ENCODE measurements at regions of chr15 and their contacts with region 1.

Region 1: DNA sequence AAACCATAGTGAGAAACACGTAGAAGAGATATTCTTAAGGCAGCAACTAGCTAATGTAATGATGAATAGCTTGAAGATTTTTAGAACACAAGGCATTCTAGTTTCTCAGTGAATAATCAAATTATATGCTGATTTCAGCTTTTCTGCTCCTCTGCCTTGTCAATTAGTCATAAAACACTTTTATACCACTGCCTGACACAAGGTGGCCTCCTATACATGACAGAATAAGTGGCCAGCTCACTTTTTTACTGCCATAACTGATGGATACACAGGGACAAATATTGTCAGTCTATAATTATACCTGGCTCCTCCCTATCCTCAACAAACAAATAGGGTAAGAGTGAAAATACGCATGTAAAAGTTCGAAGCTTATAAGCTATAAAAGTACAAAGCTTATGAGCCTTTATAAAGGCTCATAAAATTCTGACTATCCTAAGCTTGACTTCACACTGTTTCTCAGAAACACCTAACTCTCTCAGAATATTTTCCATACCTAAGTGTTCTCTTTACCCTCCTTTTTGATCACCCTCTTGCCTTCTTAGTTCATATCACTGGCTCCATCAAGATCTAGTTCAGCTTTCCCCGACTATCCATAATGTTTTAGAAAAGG is 81.6 kb downstream of the HERC1 start:
- DNase-seq: peak; percentile 62
- H3K4me3 ChIP-seq: no peak overlapping the region
- H3K27ac ChIP-seq: peak overlapping the region; percentile 6
- H3K4me1 ChIP-seq: no peaks in the 10 kb centered on the region
- H3K27me3 ChIP-seq: no peaks in the 10 kb centered on the region
- CTCF ChIP-seq: peak; percentile 78

Region 2: GRCh38 chr15:63891079-63891767 is 139.0 kb after region 1 on chr15:
- intact Hi-C with region 1: loop called (anchors 5 kb)
- DNase-seq: peak; percentile 85
- H3K4me3 ChIP-seq: no peak overlapping the region
- H3K27ac ChIP-seq: no peak overlapping the region
- H3K4me1 ChIP-seq: no peaks in the 10 kb centered on the region
- H3K27me3 ChIP-seq: no peaks in the 10 kb centered on the region
- CTCF ChIP-seq: peak; percentile 88

Region 3: GRCh38 chr15:64046347-64047153 is 294.4 kb after region 1 on chr15 and contains the start of gene DAPK2:
- intact Hi-C with region 1: loop called (anchors 5 kb)
- DNase-seq: peak; percentile 78
- H3K4me3 ChIP-seq: peak within 1 kb of the TSS; percentile 66
- H3K27ac ChIP-seq: no peak within 1 kb of the TSS
- H3K4me1 ChIP-seq: peaks cover 12% of the 10 kb centered on the region
- H3K27me3 ChIP-seq: no peaks in the 10 kb centered on the region
- CTCF ChIP-seq: peak; percentile 78
- total RNA-seq, gene DAPK2: 23.7 to 26.5 TPM

Region 4: DNA sequence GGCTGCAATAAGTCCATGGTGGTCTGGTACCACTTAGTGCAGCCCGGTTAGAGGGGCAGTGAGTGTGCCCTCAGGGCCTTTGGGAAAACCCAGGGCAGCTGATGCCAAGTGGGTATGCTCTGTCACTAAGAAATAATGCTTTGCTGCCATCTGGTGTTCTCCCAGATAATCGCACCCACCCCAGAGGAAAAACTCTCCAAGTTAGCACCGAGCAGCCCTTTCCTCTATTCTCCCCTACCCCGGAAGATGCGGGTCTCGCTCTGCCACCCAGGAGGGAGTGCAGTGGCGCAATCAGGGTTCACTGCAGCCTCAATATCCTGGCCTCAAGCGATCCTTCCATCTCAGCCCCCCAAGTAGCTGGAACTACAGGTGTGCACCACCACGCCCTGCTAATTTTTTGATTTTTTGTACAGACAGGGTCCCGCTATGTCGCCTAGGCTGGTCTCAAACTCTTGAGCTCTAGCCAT is 315.4 kb after region 1 on chr15:
- intact Hi-C with region 1: loop called (anchors 5 kb)
- DNase-seq: peak; percentile 80
- H3K4me3 ChIP-seq: no peak overlapping the region
- H3K27ac ChIP-seq: no peak overlapping the region
- H3K4me1 ChIP-seq: peaks cover 3% of the 10 kb centered on the region
- H3K27me3 ChIP-seq: no peaks in the 10 kb centered on the region
- CTCF ChIP-seq: peak; percentile 85

Measured in colonic mucosa (tissue), 4 donors.